ENCODE measurements at regions of chr15 and their contacts with region 1.

Region 1: GRCh38 chr15:72117486-72118399 is at the start of gene MYO9A:
- DNase-seq: peak; percentile 96 to 97
- ATAC-seq: peak; percentile 80 to 83
- H3K4me3 ChIP-seq: peak within 1 kb of the TSS; percentile 73 to 96 (median 77)
- H3K27ac ChIP-seq: peak within 1 kb of the TSS; percentile 92 to 98 (median 95)
- H3K4me1 ChIP-seq: peaks cover 38 to 47% of the 10 kb centered on the region in 2 donors
- H3K27me3 ChIP-seq: no peaks in the 10 kb centered on the region
- CTCF ChIP-seq: peak in 3 of 5 experiments; percentile 14 to 39 (median 20)
- POLR2A ChIP-seq: peak; percentile 92 to 96
- total RNA-seq, gene MYO9A: 21.0 to 40.9 (median 24.2) TPM

Region 2: DNA sequence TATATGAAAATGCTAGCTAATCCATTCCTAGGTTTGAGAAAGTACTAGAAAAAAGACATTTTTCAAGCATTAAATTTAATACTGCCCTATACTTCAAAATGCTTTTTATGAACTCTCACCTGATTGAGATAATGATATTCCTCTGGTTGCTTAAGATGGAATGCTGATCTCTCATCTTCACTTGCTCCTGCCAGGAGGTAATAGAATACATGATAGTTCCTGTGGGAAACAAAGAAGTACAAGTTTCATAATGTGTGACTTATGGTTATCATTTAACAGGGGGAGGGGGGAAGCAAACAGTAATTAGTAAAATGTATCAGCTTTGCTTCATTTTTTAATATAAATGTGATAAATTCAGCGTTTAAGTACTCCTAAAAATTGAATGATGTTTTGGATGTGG is 96.9 kb before region 1 on chr15:
- in situ Hi-C with region 1: no loop called
- intact Hi-C with region 1: loop called (anchors 5 kb)
- DNase-seq: no peak
- ATAC-seq: peak; percentile 83 to 87
- H3K4me3 ChIP-seq: no peak overlapping the region
- H3K27ac ChIP-seq: peak overlapping the region in 1 of 4 donors; percentile 48
- H3K4me1 ChIP-seq: peaks cover 8 to 14% of the 10 kb centered on the region in 2 donors
- H3K27me3 ChIP-seq: no peaks in the 10 kb centered on the region
- CTCF ChIP-seq: no peak
- POLR2A ChIP-seq: no peak

Region 3: DNA sequence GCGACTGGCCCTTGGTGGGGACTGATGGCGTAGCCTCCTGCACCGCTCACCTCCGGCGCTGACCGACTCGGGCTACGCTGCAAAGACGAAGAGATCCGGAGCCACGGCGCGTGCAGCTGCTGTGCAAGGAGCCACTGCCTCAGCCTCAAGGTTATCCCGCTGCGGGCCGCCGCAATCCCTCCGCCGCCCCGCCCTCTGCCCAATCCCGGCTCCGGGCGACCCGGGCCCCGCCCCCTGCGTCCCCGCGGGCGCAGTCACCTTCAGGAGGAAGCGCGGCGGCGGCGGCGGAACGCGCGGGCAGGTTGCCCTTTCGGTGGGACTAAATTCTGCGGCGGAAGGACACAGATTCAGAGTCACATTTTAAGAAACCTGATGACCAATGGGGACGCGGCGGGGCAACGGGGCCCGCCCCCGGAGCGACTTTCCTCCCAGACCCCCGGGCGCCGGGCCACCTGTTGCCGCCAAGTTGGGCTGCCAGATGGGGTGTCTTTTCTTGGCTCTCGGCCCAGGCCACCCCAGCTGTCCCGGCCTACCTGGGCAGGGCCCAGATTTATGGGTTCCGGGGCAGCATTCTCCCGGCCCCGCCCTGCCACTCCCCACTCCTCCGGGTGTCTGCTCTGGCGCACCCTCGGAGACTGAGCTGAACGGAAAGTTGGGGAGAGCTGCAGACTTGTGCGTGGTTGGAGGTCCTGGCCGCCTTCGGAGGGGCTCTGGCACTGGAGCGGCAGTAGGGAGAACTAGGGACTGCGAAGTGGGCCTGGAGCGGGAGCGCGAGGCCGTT is 113.5 kb after region 1 on chr15 and contains the start of gene PKM:
- in situ Hi-C with region 1: no loop called
- intact Hi-C with region 1: loop called (anchors 2 kb)
- DNase-seq: peak; percentile 91 to 97
- ATAC-seq: peak; percentile 55 to 70
- H3K4me3 ChIP-seq: peak within 1 kb of the TSS; percentile 68 to 96 (median 80)
- H3K27ac ChIP-seq: peak within 1 kb of the TSS; percentile 96 to 99 (median 98)
- H3K4me1 ChIP-seq: peaks cover 35 to 46% of the 10 kb centered on the region in 2 donors
- H3K27me3 ChIP-seq: no peaks in the 10 kb centered on the region
- CTCF ChIP-seq: peak in 1 of 5 experiments; percentile 46
- POLR2A ChIP-seq: peak; percentile 98
- total RNA-seq, gene PKM: 691 to 946 (median 810) TPM